MCF 10A (cell line): ENCODE measurements at regions of chr12 and their contacts with region 1.

Region 1: GRCh38 chr12:89542912-89543592 is 17.2 kb upstream of the POC1B start:
- DNase-seq: peak; percentile 87
- H3K4me3 Mint-ChIP-seq: no peak overlapping the region
- H3K27ac Mint-ChIP-seq: no peak overlapping the region
- H3K4me1 Mint-ChIP-seq: peaks cover 34% of the 10 kb centered on the region
- H3K27me3 Mint-ChIP-seq: no peaks in the 10 kb centered on the region
- CTCF ChIP-seq: peak; percentile 89

Region 2: DNA sequence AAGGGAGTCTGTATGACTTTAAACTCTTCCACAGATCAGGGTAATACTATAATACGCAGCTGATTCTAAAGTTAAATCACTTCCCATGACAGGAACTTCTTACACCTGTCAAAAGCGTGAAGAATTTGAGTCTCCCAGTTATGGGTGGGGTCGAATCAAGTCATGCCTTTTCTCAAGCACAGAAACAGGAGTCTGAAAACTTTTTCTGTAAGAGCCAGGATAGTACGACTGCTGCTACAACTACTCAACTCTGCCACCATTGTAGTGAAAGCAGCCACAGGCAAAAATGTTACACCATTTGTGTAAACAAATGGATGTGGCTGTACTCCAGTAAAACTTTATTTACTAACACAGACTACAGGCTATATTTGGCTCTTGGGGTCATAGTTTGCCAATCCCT is 281.1 kb before region 1 on chr12:
- CTCF ChIA-PET with region 1: no interaction called
- POLR2A ChIA-PET with region 1: no interaction called
- intact Hi-C with region 1: no loop called
- DNase-seq: no peak
- H3K4me3 Mint-ChIP-seq: no peak overlapping the region
- H3K27ac Mint-ChIP-seq: no peak overlapping the region
- H3K4me1 Mint-ChIP-seq: no peaks in the 10 kb centered on the region
- H3K27me3 Mint-ChIP-seq: no peaks in the 10 kb centered on the region
- CTCF ChIP-seq: no peak

Region 3: GRCh38 chr12:89949457-89950195 is 406.6 kb after region 1 on chr12:
- CTCF ChIA-PET with region 1: no interaction called
- POLR2A ChIA-PET with region 1: no interaction called
- intact Hi-C with region 1: loop called (anchors 5 kb)
- DNase-seq: peak; percentile 91
- H3K4me3 Mint-ChIP-seq: peak overlapping the region; percentile 13
- H3K27ac Mint-ChIP-seq: peak overlapping the region; percentile 93
- H3K4me1 Mint-ChIP-seq: peaks cover 42% of the 10 kb centered on the region
- H3K27me3 Mint-ChIP-seq: no peaks in the 10 kb centered on the region
- CTCF ChIP-seq: peak; percentile 29

Region 4: DNA sequence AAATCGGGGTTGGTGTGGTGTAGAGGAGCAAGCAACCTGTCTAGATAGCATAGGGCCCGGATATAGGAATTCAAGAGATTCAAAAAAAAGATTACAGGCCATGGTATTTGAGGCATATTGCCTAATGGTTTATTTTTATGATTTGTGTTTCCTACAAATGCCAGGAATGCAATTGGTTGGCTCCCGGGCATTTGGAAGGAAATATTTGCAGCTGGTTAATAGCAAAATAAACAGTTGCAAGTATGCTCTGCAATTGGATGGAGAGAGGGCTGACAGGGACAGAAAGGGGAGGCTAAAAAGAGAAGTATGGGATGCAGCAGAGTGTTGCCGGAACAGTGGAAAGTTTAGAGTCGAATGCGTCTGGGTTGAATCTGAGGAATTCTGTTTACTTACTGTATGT is 481.2 kb after region 1 on chr12:
- CTCF ChIA-PET with region 1: no interaction called
- POLR2A ChIA-PET with region 1: no interaction called
- intact Hi-C with region 1: no loop called
- DNase-seq: peak; percentile 27
- H3K4me3 Mint-ChIP-seq: no peak overlapping the region
- H3K27ac Mint-ChIP-seq: no peak overlapping the region
- H3K4me1 Mint-ChIP-seq: peaks cover 17% of the 10 kb centered on the region
- H3K27me3 Mint-ChIP-seq: no peaks in the 10 kb centered on the region
- CTCF ChIP-seq: no peak

Region 5: DNA sequence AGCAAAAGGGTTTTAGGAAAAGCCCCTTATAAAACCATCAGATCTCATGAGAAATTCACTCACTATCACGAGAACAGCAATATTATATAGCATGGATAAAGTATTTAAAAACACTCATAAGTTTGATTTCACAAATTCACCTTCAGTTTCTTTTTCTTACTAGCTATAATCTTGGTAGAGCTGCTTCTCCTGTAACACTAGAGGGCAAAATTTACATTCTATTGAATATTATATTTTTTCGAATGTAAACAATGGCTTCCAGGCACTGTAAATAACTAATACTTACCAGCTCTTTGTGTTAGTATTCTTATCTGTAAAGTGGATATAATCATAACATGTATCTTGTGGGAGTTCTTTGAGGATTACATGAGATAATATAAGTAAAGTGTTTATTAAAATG is 1152.4 kb after region 1 on chr12:
- CTCF ChIA-PET with region 1: no interaction called
- POLR2A ChIA-PET with region 1: no interaction called
- intact Hi-C with region 1: loop called (anchors 10 kb)
- DNase-seq: no peak
- H3K4me3 Mint-ChIP-seq: no peak overlapping the region
- H3K27ac Mint-ChIP-seq: no peak overlapping the region
- H3K4me1 Mint-ChIP-seq: no peaks in the 10 kb centered on the region
- H3K27me3 Mint-ChIP-seq: no peaks in the 10 kb centered on the region
- CTCF ChIP-seq: peak; percentile 32

Region 6: DNA sequence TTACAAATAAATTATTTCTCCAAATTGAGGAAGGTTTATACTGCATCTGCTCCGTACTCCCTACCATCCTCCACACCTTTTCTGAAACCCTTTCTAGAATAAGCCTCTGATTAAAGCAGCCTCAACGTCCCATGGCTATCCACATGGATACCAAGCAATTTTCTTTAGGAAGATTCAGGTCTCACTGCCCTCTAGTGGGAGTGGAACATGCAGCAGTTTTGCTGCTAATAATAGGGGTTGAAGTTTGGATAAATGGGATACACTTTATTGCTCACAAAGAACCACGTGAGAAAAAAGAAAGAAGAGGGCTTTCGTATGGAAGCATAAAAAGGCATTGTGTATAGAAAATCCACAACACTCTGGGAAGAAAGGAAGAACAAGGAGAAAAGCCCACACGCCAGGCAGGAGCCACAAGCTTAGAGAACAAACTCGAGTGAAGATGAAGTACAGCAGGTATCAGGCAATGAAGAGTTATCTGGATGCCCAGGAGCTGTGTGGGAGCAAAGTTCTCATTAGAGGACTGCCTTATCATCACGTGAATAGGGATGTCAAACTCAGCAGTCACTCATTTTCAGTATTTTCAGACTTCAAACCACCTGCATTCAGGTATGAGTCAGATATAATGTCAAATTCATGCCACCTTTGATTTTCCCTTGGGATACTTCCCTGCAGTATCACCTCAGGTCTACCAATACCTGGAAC is 1366.2 kb after region 1 on chr12:
- CTCF ChIA-PET with region 1: interaction called, 7 read pairs
- POLR2A ChIA-PET with region 1: interaction called, 3 read pairs
- intact Hi-C with region 1: loop called (anchors 1 kb)
- DNase-seq: peak; percentile 68
- H3K4me3 Mint-ChIP-seq: no peak overlapping the region
- H3K27ac Mint-ChIP-seq: no peak overlapping the region
- H3K4me1 Mint-ChIP-seq: peaks cover 17% of the 10 kb centered on the region
- H3K27me3 Mint-ChIP-seq: no peaks in the 10 kb centered on the region
- CTCF ChIP-seq: peak; percentile 45